Aorta (tissue), 5 donors: ENCODE measurements at regions of chr5 and their contacts with region 1.

Region 1: DNA sequence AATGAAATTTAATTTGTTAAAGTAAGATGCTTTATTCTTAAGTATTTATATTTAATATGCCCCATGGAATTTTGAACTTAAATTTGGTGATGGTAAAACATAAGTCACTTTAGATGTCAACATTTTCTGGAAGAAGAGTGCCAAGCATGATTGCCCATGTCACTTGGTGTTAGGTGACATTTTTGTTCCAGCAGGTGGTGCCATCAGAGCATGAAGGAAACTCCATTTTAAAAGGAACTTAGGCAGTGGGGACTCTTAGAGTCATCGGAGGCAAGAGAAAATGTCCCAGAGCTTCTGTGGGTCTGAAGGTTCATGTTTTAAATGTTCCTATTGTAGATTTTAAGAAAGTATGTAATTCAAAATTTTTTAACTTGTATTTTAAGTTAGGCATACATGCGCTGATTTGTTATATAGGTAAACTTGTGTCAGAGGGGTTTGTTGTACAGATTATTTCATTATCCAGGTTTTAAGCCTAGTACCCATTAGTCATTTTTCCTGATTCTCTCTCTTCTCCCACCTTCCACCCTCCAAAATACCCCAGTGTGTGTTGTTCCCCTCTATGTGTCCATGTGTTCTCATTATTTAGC is 789.3 kb downstream of the SEMA5A start:
- DNase-seq: no peak
- ATAC-seq: no peak
- H3K4me3 ChIP-seq: no peak overlapping the region
- H3K27ac ChIP-seq: no peak overlapping the region
- H3K4me1 ChIP-seq: no peaks in the 10 kb centered on the region
- H3K27me3 ChIP-seq: peaks cover 0 to 1% of the 10 kb centered on the region in 2 donors

Region 2: GRCh38 chr5:9207817-9208418 is 451.3 kb after region 1 on chr5:
- intact Hi-C with region 1: loop called (anchors 5 to 10 kb)
- DNase-seq: no peak
- ATAC-seq: no peak
- H3K4me3 ChIP-seq: no peak overlapping the region
- H3K27ac ChIP-seq: no peak overlapping the region
- H3K4me1 ChIP-seq: no peaks in the 10 kb centered on the region
- H3K27me3 ChIP-seq: no peaks in the 10 kb centered on the region

Region 3: GRCh38 chr5:9245071-9245470 is 488.5 kb after region 1 on chr5:
- intact Hi-C with region 1: no loop called
- DNase-seq: no peak
- ATAC-seq: no peak
- H3K4me3 ChIP-seq: no peak overlapping the region
- H3K27ac ChIP-seq: no peak overlapping the region
- H3K4me1 ChIP-seq: no peaks in the 10 kb centered on the region
- H3K27me3 ChIP-seq: no peaks in the 10 kb centered on the region